Activated CD4-positive, alpha-beta memory T cell treated with anti-CD3 and anti-CD28 coated beads, Interleukin-2, amount 10 ng/mL, durations not matched to agents 7 days and 5 days (primary cell): ENCODE measurements at regions of chr5 and their contacts with region 1.

Region 1: DNA sequence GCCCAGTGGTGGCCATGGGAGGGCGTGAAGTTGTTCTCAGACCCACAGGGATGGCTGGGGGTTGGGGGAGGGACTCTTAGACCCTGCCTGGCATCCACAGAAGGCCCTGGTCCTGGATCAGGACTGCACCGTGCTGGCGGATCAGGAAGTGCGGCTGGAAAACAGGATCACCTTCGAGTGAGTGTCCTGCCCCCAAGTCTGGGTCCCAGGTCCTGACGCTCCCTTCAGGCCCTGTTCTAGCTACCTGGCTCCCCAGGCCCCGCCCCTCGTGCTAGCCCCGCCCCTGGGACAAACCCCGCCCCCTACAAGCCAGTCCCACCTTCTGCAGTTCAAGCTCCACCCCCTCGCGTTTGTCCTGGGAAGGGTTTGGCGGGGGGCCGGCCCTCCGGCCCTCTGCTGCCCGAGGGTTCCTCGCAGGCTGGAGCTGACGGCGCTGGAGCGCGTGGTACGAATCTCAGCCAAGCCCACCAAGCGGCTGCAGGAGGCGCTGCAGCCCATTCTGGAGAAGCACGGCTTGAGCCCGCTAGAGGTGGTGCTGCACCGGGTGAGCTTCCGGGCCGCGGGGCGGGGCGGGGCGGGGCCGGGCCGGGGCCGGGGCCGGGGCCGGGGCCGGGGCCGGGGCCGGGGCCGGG is 12.9 kb downstream of the RGS14 start:
- DNase-seq: peak; percentile 79
- H3K4me3 Mint-ChIP-seq: peak overlapping the region; percentile 72
- H3K27ac Mint-ChIP-seq: peak overlapping the region; percentile 56
- H3K4me1 Mint-ChIP-seq: peaks cover 70% of the 10 kb centered on the region
- H3K27me3 Mint-ChIP-seq: no peaks in the 10 kb centered on the region

Region 2: DNA sequence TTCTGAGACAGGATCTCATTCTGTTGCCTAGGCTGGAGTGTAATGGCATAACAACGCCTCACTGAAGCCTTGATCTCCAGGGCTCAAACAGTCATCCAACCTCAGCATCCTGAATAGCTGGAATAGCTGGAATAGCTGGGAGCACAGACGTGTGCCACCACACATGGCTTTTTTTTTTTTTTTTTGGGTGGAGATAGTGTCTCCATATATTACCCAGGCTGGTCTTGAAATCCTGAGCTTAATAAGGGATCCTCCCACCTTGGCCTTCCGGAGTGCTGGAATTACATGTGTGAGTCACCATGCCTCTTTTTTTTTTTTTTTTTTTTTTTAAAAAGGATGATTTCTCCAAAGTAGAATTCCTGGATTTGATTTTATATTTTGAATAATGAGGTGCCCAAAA is 176.3 kb before region 1 on chr5:
- CTCF ChIA-PET with region 1: no interaction called
- POLR2A ChIA-PET with region 1: no interaction called
- DNase-seq: no peak
- H3K4me3 Mint-ChIP-seq: no peak overlapping the region
- H3K27ac Mint-ChIP-seq: no peak overlapping the region
- H3K4me1 Mint-ChIP-seq: peaks cover 14% of the 10 kb centered on the region
- H3K27me3 Mint-ChIP-seq: no peaks in the 10 kb centered on the region

Region 3: DNA sequence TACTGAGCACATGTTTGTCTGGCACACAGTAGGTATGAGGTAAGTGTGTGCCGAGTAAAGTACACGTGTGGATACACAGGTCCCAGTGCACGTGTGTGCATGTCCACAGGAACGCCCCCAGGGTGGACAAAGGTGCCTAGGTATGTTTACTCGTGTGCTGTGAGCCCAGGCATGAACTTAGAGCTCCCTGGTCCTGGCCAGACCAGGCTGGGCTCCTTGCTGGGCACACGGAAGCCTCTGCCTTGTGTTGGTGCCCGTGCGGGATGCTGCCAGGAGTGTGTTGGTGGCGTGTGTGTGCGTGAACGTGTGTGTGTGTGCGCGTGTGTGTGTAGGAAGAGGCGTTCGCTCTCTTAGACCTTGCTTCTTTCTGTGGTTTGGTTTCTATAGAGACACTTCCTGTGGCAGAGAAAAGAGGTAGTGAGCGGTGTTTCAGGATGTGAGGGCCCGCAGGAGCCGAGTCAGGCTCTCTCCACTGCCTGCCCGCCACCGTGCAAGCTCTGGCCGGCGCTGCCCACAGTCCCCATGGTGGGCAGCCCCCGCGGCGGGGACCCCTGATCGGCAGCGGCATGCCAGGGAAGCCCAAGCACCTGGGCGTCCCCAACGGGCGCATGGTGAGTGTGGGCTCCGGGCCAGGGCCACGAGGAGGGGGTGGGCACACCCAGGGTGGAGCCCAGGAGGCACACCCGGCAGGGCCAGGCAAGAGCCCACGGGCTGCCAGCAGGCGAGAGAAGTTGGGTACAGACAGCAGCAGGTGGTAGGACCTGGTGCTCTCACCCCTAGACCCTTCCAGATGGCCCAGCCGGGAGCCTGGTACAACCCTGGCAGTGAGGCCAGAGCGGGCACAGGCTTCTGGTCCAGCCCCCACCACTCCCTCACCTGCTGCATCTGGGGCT is 12.9 kb before region 1 on chr5 and contains the start of gene RGS14:
- CTCF ChIA-PET with region 1: interaction called, 47 read pairs
- POLR2A ChIA-PET with region 1: interaction called, 62 read pairs
- DNase-seq: peak; percentile 74
- H3K4me3 Mint-ChIP-seq: peak within 1 kb of the TSS; percentile 95
- H3K27ac Mint-ChIP-seq: peak within 1 kb of the TSS; percentile 70
- H3K4me1 Mint-ChIP-seq: peaks cover 81% of the 10 kb centered on the region
- H3K27me3 Mint-ChIP-seq: no peaks in the 10 kb centered on the region
- total RNA-seq, gene RGS14: 103 to 107 TPM